Esophagus squamous epithelium (tissue), 5 donors: ENCODE measurements at regions of chr7 and their contacts with region 1.

Region 1: DNA sequence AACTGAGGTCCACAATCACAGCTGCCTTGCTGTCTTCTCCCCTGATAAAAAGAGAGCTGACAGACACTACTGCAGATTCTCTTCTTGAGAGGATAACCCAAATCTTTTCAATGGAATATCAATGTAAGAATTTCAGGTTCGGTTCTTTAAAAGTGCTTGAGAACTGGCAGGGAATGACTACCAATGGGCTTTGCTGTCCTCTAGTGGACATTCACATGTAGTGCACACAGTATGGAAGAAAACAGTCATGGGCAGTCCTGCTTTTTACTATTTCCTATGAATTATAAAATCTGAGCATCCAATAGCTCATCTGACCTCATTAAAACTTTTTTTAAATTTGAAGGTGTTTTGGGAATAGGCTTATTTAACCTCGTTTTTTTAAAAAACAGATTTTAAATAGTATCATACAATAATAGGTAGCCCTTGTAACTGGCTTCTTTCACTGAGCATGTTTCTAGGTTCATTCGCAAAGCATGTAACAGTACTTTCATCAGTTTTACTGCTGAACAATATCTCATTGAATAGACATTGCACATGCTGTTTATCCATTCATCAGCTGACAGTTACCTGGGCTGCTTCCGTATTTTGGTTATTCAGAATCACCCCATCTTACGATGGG is 18.3 kb downstream of the FZD9 start:
- DNase-seq: no peak
- H3K4me3 ChIP-seq: no peak overlapping the region
- H3K27ac ChIP-seq: no peak overlapping the region
- H3K4me1 ChIP-seq: peaks cover 0 to 2% (median 0%) of the 10 kb centered on the region in 3 donors
- H3K27me3 ChIP-seq: no peaks in the 10 kb centered on the region
- CTCF ChIP-seq: peak; percentile 91 to 99 (median 98)
- POLR2A ChIP-seq: no peak

Region 2: GRCh38 chr7:73699370-73700069 is 247.6 kb after region 1 on chr7:
- intact Hi-C with region 1: loop called (anchors 10 kb)
- DNase-seq: no peak
- H3K4me3 ChIP-seq: no peak overlapping the region
- H3K27ac ChIP-seq: no peak overlapping the region
- H3K4me1 ChIP-seq: peaks cover 5 to 11% (median 7%) of the 10 kb centered on the region in 3 donors
- H3K27me3 ChIP-seq: no peaks in the 10 kb centered on the region
- CTCF ChIP-seq: no peak
- POLR2A ChIP-seq: no peak

Region 3: DNA sequence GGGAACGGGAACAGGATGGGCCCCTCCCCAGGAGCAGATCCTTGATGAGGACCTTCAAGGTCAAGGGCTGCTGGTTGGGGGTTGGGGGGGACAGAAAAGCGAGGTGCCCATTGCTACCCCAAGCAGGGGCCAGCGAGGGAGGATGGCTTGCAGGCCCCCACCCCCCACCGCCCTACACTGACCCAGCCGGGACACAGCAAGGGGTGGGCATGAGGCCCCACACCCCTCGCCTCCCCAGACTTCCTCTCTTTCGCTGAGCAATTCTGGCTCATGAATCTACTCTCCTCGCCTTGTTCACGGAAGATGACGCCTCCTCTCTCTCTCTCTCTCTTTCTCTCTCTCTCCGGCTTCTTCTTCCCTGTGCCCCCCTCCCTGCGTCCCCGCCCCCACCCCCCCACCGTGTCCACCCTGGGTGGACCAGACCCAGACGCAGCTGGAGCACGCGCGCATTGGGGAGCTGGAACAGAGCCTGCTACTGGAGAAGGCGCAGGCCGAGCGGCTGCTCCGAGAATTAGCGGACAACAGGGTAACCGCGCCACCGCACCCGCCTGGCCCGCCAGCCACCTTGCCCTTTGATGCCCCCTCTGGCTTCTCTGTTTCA is 920.7 kb after region 1 on chr7:
- intact Hi-C with region 1: no loop called
- DNase-seq: no peak
- H3K4me3 ChIP-seq: peak overlapping the region in 2 of 4 donors; percentile 9 to 37
- H3K27ac ChIP-seq: peak overlapping the region in 3 of 4 donors; percentile 38 to 67 (median 55)
- H3K4me1 ChIP-seq: peaks cover 0 to 23% (median 0%) of the 10 kb centered on the region in 3 donors
- H3K27me3 ChIP-seq: no peaks in the 10 kb centered on the region
- CTCF ChIP-seq: no peak
- POLR2A ChIP-seq: no peak